Sciatic nerve (tissue), 2 donors: ENCODE measurements at regions of chr5 and their contacts with region 1.

Region 1: GRCh38 chr5:52994266-52994665 is 5.1 kb downstream of the ITGA2 start:
- DNase-seq: no peak
- ATAC-seq: no peak

Region 2: GRCh38 chr5:53010814-53011213 is 16.5 kb after region 1 on chr5:
- intact Hi-C with region 1: loop called (anchors 2 kb)
- DNase-seq: no peak
- ATAC-seq: no peak

Region 3: DNA sequence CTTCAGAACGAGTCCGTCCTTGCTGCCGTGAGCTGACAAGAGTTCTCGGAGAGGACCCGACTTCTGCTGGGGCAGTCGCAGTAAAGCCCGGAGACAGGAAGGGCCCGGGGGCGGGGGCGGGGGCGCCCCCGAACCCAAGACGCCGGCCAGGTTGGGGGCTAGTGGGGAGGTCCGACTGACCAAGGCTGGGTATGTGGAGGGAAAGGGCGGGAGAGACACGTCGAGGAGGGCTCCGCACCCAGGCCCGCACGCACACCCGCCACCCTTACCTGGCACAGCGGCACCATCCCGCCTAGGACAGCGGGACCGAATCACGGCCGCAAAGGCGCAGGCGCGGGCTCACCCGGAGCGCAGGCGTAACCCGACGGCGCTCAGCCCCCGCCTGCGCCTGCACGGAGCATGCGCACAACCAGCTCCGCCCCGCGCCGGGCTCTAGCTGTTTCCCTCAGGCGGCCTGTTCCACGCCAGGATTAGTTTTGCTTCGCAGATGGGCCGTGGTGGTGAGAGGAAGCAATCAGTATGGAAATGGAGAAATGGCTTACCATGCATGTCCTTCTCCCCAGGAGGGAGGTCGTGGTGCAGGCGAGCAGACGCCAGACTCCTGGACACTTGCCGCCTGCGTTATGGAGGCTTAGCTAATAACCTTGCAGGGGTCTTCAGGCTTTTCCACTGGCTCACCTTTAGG is 115.3 kb after region 1 on chr5 and contains the start of gene MOCS2:
- intact Hi-C with region 1: no loop called
- DNase-seq: peak; percentile 94
- ATAC-seq: peak; percentile 100
- total RNA-seq, gene MOCS2: 41.4 TPM